ENCODE measurements at regions of chr2 and their contacts with region 1.

Region 1: DNA sequence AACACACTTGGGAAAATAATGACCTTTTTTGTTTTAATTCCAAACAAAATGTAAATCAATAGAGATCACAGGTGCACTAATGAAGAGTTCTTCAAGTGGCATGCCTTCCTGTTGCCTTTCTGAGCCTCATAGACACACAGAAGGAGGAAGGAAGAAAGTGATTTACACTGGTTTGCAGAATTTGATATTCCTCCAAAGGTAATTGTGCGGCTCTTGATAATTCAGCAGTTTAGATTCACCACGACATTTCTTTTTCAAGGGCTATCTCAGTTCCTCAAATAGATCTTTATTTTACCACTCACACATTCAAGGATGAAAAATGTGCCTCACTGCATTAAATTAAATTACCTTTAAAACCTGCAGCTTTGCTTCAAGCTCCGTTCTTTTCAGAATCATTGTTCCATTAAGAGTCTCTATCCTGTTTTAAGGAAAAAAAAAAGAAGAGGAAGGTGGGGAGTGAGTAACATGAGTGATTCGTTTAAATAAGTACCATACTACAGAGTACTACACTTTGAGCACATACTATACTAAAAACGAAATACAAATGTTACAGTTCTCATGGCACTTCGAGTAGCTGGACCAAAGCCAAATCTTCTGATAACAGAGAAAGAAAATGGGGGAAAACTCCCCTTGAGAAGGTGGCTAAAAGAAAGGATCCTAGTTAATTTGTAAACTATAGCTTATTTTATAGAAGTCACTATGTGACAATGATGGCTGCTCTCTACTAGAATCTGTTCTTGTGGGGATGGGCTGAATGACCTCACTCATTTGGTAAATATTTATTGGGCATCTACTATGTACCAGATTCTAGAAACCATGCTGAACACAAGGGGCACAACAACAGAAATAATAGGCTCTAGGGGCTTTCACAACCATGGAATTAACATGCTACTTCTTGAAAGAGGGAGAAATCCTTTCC is 16.6 kb downstream of the CYTIP start:
- DNase-seq: no peak
- ATAC-seq: no peak
- H3K4me3 ChIP-seq: no peak overlapping the region
- H3K4me3 Mint-ChIP-seq: peak overlapping the region; percentile 2 to 100 (median 38)
- H3K27ac ChIP-seq: peak overlapping the region; percentile 57
- H3K27ac Mint-ChIP-seq: peak overlapping the region; percentile 73 to 99 (median 97)
- H3K4me1 ChIP-seq: peaks cover 40 to 61% of the 10 kb centered on the region in 2 donors
- H3K4me1 Mint-ChIP-seq: peaks cover 43 to 91% (median 85%) of the 10 kb centered on the region in 7 donors
- H3K27me3 ChIP-seq: no peaks in the 10 kb centered on the region
- H3K27me3 Mint-ChIP-seq: no peaks in the 10 kb centered on the region

Region 2: DNA sequence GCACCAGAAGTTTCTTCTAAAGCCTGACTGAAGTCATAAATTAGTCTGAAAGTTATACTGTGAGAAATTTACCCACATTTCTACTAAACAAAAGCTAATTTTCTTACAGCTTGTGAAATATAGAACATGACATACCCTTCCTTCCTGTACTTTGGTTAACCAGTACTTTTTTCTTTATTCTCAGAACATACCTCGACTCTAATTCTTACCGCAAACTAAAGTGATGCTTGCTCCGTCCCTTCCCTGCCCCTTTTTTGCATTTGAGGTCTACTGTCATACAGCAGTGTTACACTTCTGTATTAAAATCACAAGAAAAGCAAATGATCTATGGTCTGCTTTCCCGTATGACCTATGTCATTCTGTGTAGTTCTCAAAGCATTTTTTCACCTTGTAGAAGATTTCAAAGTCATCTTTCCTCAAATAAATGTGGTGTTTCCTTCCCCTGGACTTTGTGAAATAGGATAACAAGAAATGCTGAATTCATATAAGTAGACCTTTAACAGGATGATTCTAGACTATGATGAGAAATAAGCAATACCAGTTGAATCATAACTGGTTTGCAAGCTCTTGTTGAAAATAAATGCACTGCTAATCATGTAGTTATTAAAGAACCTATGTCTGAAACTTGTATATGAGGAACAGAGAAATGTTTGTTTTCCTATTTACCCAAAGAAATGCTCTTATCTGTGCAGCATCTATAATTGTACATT is 13.8 kb before region 1 on chr2:
- CTCF ChIA-PET with region 1: interaction called, 34 read pairs
- POLR2A ChIA-PET with region 1: interaction called, 810 read pairs
- intact Hi-C with region 1: loop called (anchors 1 kb)
- DNase-seq: peak in 7 of 9 donors; percentile 71 to 94 (median 88)
- ATAC-seq: peak; percentile 86
- H3K4me3 ChIP-seq: peak overlapping the region; percentile 22
- H3K4me3 Mint-ChIP-seq: peak overlapping the region; percentile 45 to 85 (median 68)
- H3K27ac ChIP-seq: peak overlapping the region; percentile 86
- H3K27ac Mint-ChIP-seq: peak overlapping the region; percentile 92 to 98 (median 95)
- H3K4me1 ChIP-seq: peaks cover 84 to 89% of the 10 kb centered on the region in 2 donors
- H3K4me1 Mint-ChIP-seq: peaks cover 58 to 97% (median 93%) of the 10 kb centered on the region in 7 donors
- H3K27me3 ChIP-seq: no peaks in the 10 kb centered on the region
- H3K27me3 Mint-ChIP-seq: no peaks in the 10 kb centered on the region

Region 3: GRCh38 chr2:157460384-157460837 is 33.1 kb after region 1 on chr2:
- CTCF ChIA-PET with region 1: no interaction called
- POLR2A ChIA-PET with region 1: interaction called, 297 read pairs
- intact Hi-C with region 1: no loop called
- DNase-seq: no peak
- ATAC-seq: no peak
- H3K4me3 ChIP-seq: no peak overlapping the region
- H3K4me3 Mint-ChIP-seq: peak overlapping the region in 8 of 10 donors; percentile 16 to 71 (median 48)
- H3K27ac ChIP-seq: no peak overlapping the region
- H3K27ac Mint-ChIP-seq: peak overlapping the region in 8 of 9 donors; percentile 7 to 98 (median 80)
- H3K4me1 ChIP-seq: peaks cover 15 to 59% of the 10 kb centered on the region in 2 donors
- H3K4me1 Mint-ChIP-seq: peaks cover 38 to 99% (median 94%) of the 10 kb centered on the region in 7 donors
- H3K27me3 ChIP-seq: no peaks in the 10 kb centered on the region
- H3K27me3 Mint-ChIP-seq: no peaks in the 10 kb centered on the region

Measured in naive thymus-derived CD4-positive, alpha-beta T cell (primary cell).